ENCODE measurements at regions of chr9 and their contacts with region 1.

Region 1: DNA sequence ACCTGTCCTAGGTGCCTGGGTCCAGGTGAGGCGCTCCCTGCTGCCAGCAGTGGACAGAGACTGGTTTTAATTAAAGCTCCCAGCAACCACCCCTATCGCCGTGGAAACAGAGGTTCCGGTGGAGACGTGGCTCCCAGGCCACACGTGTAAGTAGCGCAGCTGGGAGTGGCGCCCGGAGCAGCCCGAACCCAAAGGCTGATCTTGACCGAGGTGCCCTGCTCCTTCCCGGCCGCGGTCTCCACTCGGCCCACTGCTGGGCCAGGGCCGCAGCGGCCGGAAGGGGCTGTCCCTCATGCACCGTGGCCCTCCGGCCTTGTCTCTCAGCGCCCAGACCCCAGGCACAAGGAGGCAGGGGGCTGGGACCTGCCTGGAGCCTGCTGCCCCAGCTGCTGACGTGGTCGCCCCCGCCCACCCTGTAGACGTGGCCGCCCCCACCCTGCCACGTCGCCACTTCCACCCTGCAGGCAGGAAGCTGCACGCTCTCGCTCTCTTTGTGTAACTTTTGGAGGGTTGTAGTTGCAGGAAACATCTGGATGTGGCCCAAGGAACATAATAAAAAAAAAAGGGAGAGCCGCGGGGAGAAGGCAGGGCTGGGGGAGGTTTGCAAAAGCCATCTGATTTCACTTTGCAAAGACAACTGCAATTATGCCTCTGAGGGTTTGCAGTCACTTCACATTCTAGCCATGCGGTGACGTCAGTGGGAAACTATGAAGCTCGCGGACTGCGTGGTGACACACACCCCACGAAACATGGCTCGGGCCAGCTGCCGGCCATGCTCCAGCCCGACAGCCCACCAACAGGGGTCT is 129.9 kb downstream of the RXRA start:
- DNase-seq: peak; percentile 96
- H3K4me3 ChIP-seq: peak overlapping the region; percentile 3 to 43 (median 37)
- H3K27ac ChIP-seq: peak overlapping the region; percentile 77 to 89 (median 87)
- H3K4me1 ChIP-seq: peaks cover 4 to 44% (median 35%) of the 10 kb centered on the region in 4 donors
- H3K27me3 ChIP-seq: no peaks in the 10 kb centered on the region
- CTCF ChIP-seq: no peak
- EP300 ChIP-seq: peak in 2 of 4 donors; percentile 51 to 54
- POLR2A ChIP-seq: no peak

Region 2: DNA sequence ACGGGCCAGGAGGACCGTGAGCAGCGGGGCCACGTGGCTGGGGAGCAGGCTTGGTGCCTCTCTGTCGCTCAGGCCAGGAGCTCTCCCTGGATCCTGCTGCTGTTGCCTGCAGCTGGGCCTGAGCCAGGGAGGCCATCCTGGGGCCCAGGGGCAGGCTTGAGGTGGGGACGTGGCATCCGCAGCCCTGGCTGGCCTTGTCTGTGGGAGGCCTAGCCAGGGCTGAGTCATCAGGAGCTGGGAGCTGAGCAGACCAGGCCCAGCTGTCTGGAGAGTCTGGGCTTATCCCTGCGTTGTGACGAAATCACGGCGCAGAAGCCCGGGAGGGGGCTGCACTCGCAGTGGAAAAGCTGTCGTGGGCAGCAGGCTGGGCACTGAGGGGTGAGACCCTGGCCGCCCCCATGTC is 46.7 kb after region 1 on chr9:
- intact Hi-C with region 1: no loop called
- DNase-seq: peak; percentile 90
- H3K4me3 ChIP-seq: no peak overlapping the region
- H3K27ac ChIP-seq: peak overlapping the region in 1 of 4 donors; percentile 18
- H3K4me1 ChIP-seq: peaks cover 0 to 14% (median 10%) of the 10 kb centered on the region in 4 donors
- H3K27me3 ChIP-seq: peaks cover 15 to 28% (median 19%) of the 10 kb centered on the region in 3 donors
- CTCF ChIP-seq: no peak
- EP300 ChIP-seq: no peak
- POLR2A ChIP-seq: no peak

Region 3: GRCh38 chr9:134544388-134545214 is 88.5 kb after region 1 on chr9:
- intact Hi-C with region 1: loop called (anchors 5 kb)
- DNase-seq: peak; percentile 82
- H3K4me3 ChIP-seq: no peak overlapping the region
- H3K27ac ChIP-seq: peak overlapping the region; percentile 57 to 80 (median 66)
- H3K4me1 ChIP-seq: peaks cover 0 to 31% (median 24%) of the 10 kb centered on the region in 4 donors
- H3K27me3 ChIP-seq: no peaks in the 10 kb centered on the region
- CTCF ChIP-seq: no peak
- EP300 ChIP-seq: no peak
- POLR2A ChIP-seq: no peak

Region 4: GRCh38 chr9:134689321-134690181 is 233.4 kb after region 1 on chr9:
- intact Hi-C with region 1: loop called (anchors 5 kb)
- DNase-seq: peak; percentile 91
- H3K4me3 ChIP-seq: no peak overlapping the region
- H3K27ac ChIP-seq: peak overlapping the region in 3 of 4 donors; percentile 30 to 64 (median 44)
- H3K4me1 ChIP-seq: peaks cover 0 to 50% (median 38%) of the 10 kb centered on the region in 4 donors
- H3K27me3 ChIP-seq: no peaks in the 10 kb centered on the region
- CTCF ChIP-seq: peak; percentile 58 to 95 (median 82)
- EP300 ChIP-seq: no peak
- POLR2A ChIP-seq: no peak

Measured in sigmoid colon (tissue), 7 donors.